WTC11 (cell line): ENCODE measurements at regions of chr7 and their contacts with region 1.

Region 1: DNA sequence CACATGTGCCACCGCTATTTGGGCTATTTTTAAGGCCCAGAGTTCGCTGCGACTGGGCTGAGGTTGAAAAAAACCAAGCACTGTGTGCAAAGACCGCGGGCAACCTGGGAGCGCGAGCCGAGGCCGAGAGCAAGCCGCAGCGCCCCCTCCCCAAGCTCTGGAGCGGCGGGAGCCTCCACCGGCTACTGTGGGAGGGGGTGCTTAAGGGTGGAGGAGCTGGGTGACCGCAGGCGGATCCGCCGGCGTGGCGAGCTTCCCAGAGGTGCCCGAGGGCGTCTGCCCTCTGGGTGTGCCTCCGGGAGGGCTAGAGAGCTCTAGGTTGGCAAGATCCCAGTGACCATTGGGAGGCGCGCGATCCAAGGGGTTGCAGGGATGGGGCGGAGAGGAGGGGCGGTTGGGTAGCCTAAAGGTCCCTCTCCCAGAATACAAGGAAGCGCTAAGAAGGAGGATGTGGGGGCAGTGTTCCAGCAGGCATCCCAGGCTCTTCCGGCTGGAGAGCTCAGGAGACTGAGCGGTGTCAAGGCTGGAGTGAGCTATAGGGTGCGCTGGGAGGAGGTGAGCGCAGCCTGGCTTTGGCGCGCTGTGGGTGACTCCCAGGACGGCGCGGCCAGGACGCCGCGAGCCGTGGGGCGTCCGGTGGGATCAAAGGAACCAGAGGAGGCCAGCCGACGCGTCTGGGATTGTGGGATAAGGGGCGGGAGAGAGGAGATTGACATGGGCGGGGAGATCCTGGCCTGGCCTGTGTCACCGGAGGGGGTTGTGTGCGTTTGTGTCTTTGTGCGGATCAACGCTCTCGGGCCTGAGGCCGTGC is 8.0 kb downstream of the DLX5 start:
- DNase-seq: peak; percentile 80
- ATAC-seq: peak; percentile 69
- H3K4me3 Mint-ChIP-seq: peak overlapping the region; percentile 65
- H3K27ac Mint-ChIP-seq: no peak overlapping the region
- H3K4me1 Mint-ChIP-seq: peaks cover 61% of the 10 kb centered on the region
- H3K27me3 Mint-ChIP-seq: peaks cover 100% of the 10 kb centered on the region
- CTCF ChIP-seq: no peak

Region 2: DNA sequence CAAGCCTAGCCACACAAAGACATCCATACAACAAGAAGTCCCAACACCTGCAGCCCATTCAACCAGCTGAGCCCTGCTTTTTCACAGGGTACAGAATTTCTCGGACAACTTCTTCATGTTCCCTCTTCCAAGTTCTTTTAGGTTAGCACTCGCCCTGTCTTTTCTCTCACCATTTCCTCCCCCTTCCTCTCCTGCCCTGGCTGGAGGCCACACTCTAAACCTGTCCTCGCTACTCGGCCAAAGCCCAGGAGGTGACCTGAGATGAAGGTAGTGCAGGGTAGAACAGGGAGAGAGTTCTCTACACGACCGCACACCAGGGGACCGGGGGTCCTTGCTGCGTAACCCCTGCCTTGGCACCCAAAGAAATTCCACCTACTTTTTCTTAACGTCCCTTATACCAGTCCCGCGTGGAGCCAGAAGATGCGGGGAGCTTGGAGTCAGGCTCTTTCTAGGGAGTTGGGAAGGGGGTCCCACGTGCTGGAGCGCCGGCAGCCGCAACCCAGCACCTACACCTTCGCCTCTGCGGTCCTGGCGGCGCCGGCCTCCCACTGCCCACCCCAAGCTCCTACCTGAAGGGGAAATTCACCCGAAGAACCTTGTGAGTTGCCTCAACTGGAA is 27.2 kb before region 1 on chr7:
- CTCF ChIA-PET with region 1: interaction called, 11 read pairs
- POLR2A ChIA-PET with region 1: interaction called, 4 read pairs
- DNase-seq: no peak
- ATAC-seq: peak; percentile 75
- H3K4me3 Mint-ChIP-seq: peak overlapping the region; percentile 48
- H3K27ac Mint-ChIP-seq: no peak overlapping the region
- H3K4me1 Mint-ChIP-seq: peaks cover 55% of the 10 kb centered on the region
- H3K27me3 Mint-ChIP-seq: peaks cover 98% of the 10 kb centered on the region
- CTCF ChIP-seq: no peak

Region 3: GRCh38 chr7:96996105-96996957 is 20.3 kb before region 1 on chr7:
- CTCF ChIA-PET with region 1: interaction called, 11 read pairs
- POLR2A ChIA-PET with region 1: interaction called, 5 read pairs
- DNase-seq: no peak
- ATAC-seq: peak; percentile 13
- H3K4me3 Mint-ChIP-seq: peak overlapping the region; percentile 41
- H3K27ac Mint-ChIP-seq: no peak overlapping the region
- H3K4me1 Mint-ChIP-seq: peaks cover 72% of the 10 kb centered on the region
- H3K27me3 Mint-ChIP-seq: peaks cover 100% of the 10 kb centered on the region
- CTCF ChIP-seq: no peak

Region 4: GRCh38 chr7:97006036-97006815 is 10.4 kb before region 1 on chr7:
- CTCF ChIA-PET with region 1: interaction called, 31 read pairs
- POLR2A ChIA-PET with region 1: interaction called, 19 read pairs
- DNase-seq: peak; percentile 76
- ATAC-seq: peak; percentile 41
- H3K4me3 Mint-ChIP-seq: peak overlapping the region; percentile 73
- H3K27ac Mint-ChIP-seq: no peak overlapping the region
- H3K4me1 Mint-ChIP-seq: peaks cover 43% of the 10 kb centered on the region
- H3K27me3 Mint-ChIP-seq: peaks cover 97% of the 10 kb centered on the region
- CTCF ChIP-seq: no peak

Region 5: DNA sequence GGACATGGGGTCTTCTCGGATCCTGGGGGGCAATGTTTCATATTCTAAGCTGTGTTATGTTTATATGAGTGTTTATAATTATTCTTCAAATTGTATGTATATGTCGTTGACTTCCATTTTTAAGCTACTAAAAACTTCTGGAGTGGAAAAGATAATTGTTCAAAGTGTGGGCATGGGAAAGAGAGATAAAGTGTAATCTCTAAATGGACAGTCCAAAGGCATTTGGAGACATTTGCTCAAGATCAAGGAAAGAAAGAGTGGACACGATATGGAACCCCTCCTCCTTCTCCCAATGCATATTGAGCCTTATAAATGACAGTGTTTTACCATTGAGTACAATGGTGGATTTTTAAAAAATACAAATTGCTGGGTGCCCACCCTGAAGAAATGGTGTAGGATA is 182.0 kb after region 1 on chr7:
- CTCF ChIA-PET with region 1: no interaction called
- POLR2A ChIA-PET with region 1: no interaction called
- DNase-seq: no peak
- ATAC-seq: no peak
- H3K4me3 Mint-ChIP-seq: no peak overlapping the region
- H3K27ac Mint-ChIP-seq: no peak overlapping the region
- H3K4me1 Mint-ChIP-seq: no peaks in the 10 kb centered on the region
- H3K27me3 Mint-ChIP-seq: no peaks in the 10 kb centered on the region
- CTCF ChIP-seq: no peak